ENCODE measurements at regions of chr1 and their contacts with region 1.

Region 1: GRCh38 chr1:63537940-63538339 is 14.6 kb downstream of the EFCAB7 start:
- DNase-seq: peak; percentile 38
- ATAC-seq: no peak
- H3K4me3 ChIP-seq: no peak overlapping the region
- H3K27ac ChIP-seq: no peak overlapping the region
- H3K4me1 ChIP-seq: no peaks in the 10 kb centered on the region
- H3K27me3 ChIP-seq: no peaks in the 10 kb centered on the region
- CTCF ChIP-seq: peak; percentile 72

Region 2: DNA sequence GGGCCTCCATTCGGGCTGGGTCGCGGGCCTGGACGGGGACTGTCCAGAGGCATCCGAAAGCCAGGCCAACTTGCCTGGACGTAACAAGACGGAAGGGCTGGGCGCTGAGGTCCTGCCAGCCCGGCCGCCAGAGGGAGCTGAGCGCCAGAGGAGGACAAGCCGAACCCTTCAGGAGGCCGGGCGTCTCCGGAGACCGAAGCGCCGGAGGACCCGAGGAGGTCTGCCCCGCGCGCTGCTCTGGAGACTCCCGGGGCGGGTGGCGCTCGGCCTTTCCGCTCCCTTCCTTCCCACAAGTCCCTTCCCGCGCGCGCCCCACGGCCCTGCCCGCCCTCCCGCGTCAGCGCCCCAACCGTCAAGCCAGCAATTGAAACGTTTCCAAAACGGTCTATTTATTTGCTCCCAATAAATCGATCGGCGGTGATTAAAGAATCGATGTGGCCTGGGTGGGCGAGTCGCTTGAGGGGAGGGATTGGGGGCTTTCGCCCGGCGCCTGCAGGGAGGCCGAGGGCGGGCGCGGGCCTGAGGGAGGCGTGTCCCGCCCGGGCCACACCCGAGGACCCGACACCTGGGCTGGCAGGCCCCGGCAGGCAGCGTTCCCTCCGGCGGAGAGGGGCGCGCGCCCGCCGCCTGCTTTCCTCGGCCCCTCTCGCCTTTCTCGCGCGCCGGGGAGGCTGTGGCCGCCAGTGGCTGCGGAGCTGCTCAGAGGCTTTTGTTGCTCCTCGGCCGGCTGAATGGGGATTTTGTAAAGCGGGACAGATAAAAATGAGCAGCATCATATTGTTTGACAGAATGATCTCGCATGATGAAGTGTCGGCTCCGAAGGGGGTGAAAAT is 220.7 kb before region 1 on chr1:
- CTCF ChIA-PET with region 1: no interaction called
- POLR2A ChIA-PET with region 1: no interaction called
- intact Hi-C with region 1: loop called (anchors 1 kb)
- DNase-seq: peak; percentile 91
- ATAC-seq: peak; percentile 90
- H3K4me3 ChIP-seq: peak overlapping the region; percentile 79
- H3K27ac ChIP-seq: peak overlapping the region; percentile 52
- H3K4me1 ChIP-seq: peaks cover 10% of the 10 kb centered on the region; the same call in 1 of the 2 replicates
- H3K27me3 ChIP-seq: no peaks in the 10 kb centered on the region
- CTCF ChIP-seq: peak; percentile 72

Region 3: GRCh38 chr1:63463248-63463647 is 74.7 kb before region 1 on chr1:
- CTCF ChIA-PET with region 1: interaction called, 11 read pairs
- POLR2A ChIA-PET with region 1: no interaction called
- intact Hi-C with region 1: loop called (anchors 1 kb)
- DNase-seq: peak; percentile 45
- ATAC-seq: peak; percentile 59
- H3K4me3 ChIP-seq: no peak overlapping the region
- H3K27ac ChIP-seq: peak overlapping the region; percentile 22
- H3K4me1 ChIP-seq: peaks cover 6% of the 10 kb centered on the region; the same call in 1 of the 2 replicates
- H3K27me3 ChIP-seq: no peaks in the 10 kb centered on the region
- CTCF ChIP-seq: no peak

Region 4: DNA sequence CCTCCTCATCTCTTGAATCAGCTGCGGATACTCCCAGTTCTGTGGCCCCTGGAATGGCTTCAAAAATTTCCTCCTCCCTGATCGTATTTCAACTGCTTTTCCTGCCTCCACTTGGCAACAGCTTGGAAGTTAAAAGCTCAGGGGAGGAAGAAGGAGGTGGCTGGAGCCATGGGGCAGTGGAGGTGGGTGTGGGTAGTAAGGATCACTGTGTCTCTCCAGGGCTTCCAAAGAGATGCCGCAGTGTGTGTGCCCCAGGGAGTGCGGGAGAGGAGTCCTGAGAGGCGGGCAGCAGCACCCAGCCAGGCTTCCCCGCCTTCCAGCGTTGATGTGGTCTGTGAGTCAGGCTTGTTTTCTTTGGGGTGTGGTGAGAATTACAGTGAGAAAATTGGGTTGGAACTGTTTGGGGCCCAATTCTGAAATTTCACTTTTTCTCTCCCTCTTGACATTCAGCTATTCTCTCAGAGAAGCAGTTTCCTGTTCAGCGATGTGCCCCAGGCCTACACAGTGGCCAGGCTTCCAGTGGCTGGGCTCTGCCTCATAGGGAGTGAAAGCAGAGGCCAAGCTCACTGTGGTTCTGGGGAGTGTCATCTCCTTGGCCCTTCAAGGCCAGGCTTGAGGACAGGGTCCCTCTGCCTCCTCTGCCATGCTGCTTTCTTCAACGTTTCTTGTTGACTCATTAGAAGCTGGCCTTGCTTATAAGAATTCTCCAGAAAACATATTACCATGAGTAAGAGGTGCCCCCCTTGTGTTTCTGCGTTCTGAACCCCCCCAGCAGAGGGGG is 124.3 kb after region 1 on chr1:
- CTCF ChIA-PET with region 1: no interaction called
- POLR2A ChIA-PET with region 1: no interaction called
- intact Hi-C with region 1: no loop called
- DNase-seq: peak; percentile 93
- ATAC-seq: peak; percentile 81
- H3K4me3 ChIP-seq: peak overlapping the region; percentile 41; the same call in 1 of the 2 replicates
- H3K27ac ChIP-seq: peak overlapping the region; percentile 99
- H3K4me1 ChIP-seq: peaks cover 48% of the 10 kb centered on the region
- H3K27me3 ChIP-seq: no peaks in the 10 kb centered on the region
- CTCF ChIP-seq: no peak

Measured in PC-3 (cell line).